ENCODE measurements at regions of chr6 and their contacts with region 1.

Region 1: GRCh38 chr6:13487122-13488014 is at the start of gene GFOD1:
- DNase-seq: peak; percentile 33 to 87 (median 54)
- ATAC-seq: peak; percentile 90
- H3K4me3 ChIP-seq: peak within 1 kb of the TSS; percentile 80
- H3K4me3 Mint-ChIP-seq: peak within 1 kb of the TSS; percentile 78 to 96 (median 92)
- H3K27ac ChIP-seq: peak within 1 kb of the TSS; percentile 23
- H3K27ac Mint-ChIP-seq: peak within 1 kb of the TSS in 7 of 9 donors; percentile 35 to 76 (median 65)
- H3K4me1 ChIP-seq: peaks cover 4 to 9% of the 10 kb centered on the region in 2 donors
- H3K4me1 Mint-ChIP-seq: peaks cover 23 to 40% (median 30%) of the 10 kb centered on the region in 7 donors
- H3K27me3 ChIP-seq: no peaks in the 10 kb centered on the region
- H3K27me3 Mint-ChIP-seq: peaks cover 0 to 14% (median 12%) of the 10 kb centered on the region in 5 donors
- total RNA-seq, gene GFOD1: 0.73 to 10.8 (median 2.0) TPM

Region 2: DNA sequence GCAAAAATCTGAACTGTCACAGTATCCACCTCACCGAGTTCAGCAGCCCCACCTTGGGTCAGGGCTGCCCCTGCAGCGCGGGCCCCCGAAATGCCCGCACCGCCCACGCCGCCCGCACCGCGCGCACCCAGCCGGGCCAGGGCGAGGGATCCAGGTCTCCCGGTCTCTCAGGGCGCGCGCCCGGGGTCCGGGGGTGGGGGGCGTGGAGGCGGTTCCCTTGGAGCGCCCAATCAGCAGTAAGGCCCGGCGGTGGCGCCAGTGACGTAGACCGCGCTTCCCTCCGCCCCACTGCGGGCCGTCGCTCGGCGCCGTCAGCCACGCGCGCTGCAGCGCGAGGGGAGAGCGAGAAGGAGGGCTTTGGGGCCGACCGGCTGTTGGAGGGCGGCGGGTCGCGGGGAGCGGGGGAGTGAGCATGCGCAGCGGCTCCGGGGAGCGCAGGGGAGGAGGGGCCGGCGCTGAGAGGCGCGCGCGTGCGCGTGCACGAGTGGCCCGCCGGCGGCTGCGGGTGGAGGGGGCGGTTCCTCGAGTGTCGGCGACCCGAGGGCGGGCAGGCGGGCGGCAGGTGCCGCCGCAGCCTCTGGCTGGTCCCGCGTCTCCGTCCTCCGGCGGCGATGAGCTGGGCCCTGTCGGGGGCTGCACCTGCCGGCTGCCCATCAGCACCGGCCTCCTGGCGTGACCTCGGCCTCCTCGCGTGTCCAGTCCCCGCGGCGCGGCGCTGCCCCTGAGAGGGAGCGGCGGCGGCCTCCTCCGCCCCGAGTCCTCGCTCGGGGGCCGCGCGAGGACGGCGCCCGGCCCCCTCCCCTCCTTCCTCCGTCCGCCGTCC is 1949.9 kb before region 1 on chr6 and contains the start of gene TMEM170B:
- CTCF ChIA-PET with region 1: no interaction called
- POLR2A ChIA-PET with region 1: no interaction called
- intact Hi-C with region 1: loop called in 1 of 2 experiments (anchors 5 kb)
- DNase-seq: peak; percentile 94 to 99 (median 98)
- ATAC-seq: peak; percentile 95
- H3K4me3 ChIP-seq: peak within 1 kb of the TSS; percentile 62
- H3K4me3 Mint-ChIP-seq: peak within 1 kb of the TSS; percentile 82 to 90 (median 88)
- H3K27ac ChIP-seq: peak within 1 kb of the TSS; percentile 76
- H3K27ac Mint-ChIP-seq: peak within 1 kb of the TSS in 8 of 9 donors; percentile 67 to 93 (median 83)
- H3K4me1 ChIP-seq: peaks cover 4 to 5% of the 10 kb centered on the region in 2 donors
- H3K4me1 Mint-ChIP-seq: peaks cover 6 to 28% (median 19%) of the 10 kb centered on the region in 7 donors
- H3K27me3 ChIP-seq: no peaks in the 10 kb centered on the region
- H3K27me3 Mint-ChIP-seq: peaks cover 0 to 76% (median 7%) of the 10 kb centered on the region in 5 donors
- total RNA-seq, gene TMEM170B: 0.29 to 12.7 (median 3.4) TPM

Region 3: DNA sequence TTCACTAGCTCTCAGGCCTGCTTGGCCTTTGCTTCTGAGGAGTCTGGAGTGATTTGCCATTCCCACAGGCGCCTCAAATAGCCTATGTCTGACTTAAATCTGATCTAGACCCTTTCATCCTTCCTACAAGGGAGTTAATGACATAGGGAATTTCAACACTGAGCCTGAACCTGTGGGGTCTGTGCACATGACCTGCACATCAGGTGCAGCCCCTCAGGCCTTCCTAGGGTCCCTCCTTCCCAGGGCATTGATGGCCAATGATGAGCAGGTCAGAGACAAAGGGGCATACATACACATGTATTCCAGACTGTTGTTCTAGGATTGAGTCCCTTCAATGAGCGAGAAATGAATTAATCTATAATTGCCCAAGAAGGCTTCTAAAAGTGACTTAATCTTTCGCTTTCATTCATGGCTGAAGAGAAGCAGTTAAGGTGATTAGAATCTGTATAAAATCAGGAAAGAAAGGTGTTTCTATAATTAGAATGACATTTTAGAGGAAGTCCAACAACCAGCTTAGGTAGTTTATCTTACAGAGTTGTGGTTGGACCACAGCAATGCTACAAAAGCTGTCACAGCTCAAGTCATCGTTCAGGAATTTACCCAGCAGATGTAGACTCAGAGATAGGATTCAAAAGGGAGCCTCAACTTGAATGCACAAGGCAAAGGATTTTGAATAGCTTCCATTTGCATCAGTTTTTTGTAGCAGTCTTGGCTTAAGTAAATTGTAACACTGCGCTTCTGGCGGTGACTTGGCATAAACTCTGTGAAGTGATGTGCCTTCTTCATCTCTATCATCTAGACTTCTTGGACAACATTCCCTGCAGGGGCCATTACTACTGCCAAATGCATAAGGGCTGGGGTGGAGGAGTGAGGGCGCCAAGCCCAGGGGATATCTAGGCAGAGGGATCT is 132.1 kb before region 1 on chr6:
- CTCF ChIA-PET with region 1: no interaction called
- POLR2A ChIA-PET with region 1: no interaction called
- intact Hi-C with region 1: loop called (anchors 1 to 5 kb)
- DNase-seq: peak in 8 of 9 donors; percentile 10 to 42 (median 30)
- ATAC-seq: peak; percentile 75
- H3K4me3 ChIP-seq: peak overlapping the region; percentile 22
- H3K4me3 Mint-ChIP-seq: peak overlapping the region; percentile 78 to 91 (median 80)
- H3K27ac ChIP-seq: peak overlapping the region; percentile 46
- H3K27ac Mint-ChIP-seq: peak overlapping the region; percentile 71 to 98 (median 85)
- H3K4me1 ChIP-seq: peaks cover 27 to 32% of the 10 kb centered on the region in 2 donors
- H3K4me1 Mint-ChIP-seq: peaks cover 33 to 56% (median 46%) of the 10 kb centered on the region in 7 donors
- H3K27me3 ChIP-seq: no peaks in the 10 kb centered on the region
- H3K27me3 Mint-ChIP-seq: no peaks in the 10 kb centered on the region

Region 4: DNA sequence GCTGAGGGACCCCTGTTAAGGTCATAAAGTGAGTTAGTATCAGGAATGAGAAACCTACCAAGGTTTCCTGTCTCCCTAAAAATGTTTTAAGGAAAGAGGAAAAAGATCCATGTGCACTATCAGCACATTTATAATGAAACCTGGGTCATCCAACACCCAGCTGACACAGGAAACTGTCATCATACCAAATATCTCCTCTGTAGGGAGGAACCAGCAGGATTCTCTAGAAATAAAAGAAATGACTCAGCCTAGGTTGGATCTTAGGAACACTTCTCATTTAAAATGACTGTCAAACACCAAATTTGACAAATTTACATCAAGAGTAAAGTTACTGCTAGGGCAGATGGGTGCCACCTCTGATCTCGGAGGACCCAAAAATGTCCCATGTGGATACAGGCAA is 21.6 kb before region 1 on chr6:
- CTCF ChIA-PET with region 1: no interaction called
- POLR2A ChIA-PET with region 1: no interaction called
- intact Hi-C with region 1: loop called in 1 of 2 experiments (anchors 2 kb)
- DNase-seq: no peak
- ATAC-seq: no peak
- H3K4me3 ChIP-seq: no peak overlapping the region
- H3K4me3 Mint-ChIP-seq: no peak overlapping the region
- H3K27ac ChIP-seq: no peak overlapping the region
- H3K27ac Mint-ChIP-seq: peak overlapping the region in 2 of 9 donors; percentile 16 to 72
- H3K4me1 ChIP-seq: peaks cover 0 to 16% of the 10 kb centered on the region in 2 donors
- H3K4me1 Mint-ChIP-seq: peaks cover 16 to 50% (median 37%) of the 10 kb centered on the region in 7 donors
- H3K27me3 ChIP-seq: no peaks in the 10 kb centered on the region
- H3K27me3 Mint-ChIP-seq: no peaks in the 10 kb centered on the region

Region 5: DNA sequence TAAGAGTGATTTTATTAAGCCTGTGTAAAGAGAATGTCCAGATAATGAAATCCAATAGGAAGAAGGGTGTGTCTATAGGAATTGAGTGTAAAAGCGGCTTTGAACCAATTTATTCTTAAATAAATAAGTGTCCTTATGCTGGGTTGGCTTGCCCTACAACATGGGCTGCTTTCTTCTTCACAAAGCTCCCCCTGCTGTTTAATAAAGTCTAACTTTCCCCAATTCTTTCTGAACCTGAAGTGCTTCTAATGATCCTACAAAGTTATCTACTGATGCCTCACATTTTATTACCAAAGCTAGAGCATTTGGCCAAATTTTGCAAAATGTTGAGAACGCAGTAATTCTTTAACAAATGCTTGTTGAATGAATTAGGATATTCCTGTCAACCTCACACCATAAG is 50.7 kb after region 1 on chr6:
- CTCF ChIA-PET with region 1: no interaction called
- POLR2A ChIA-PET with region 1: interaction called, 3 read pairs
- intact Hi-C with region 1: loop called in 1 of 2 experiments (anchors 1 kb)
- DNase-seq: peak in 5 of 9 donors; percentile 18 to 38 (median 25)
- ATAC-seq: no peak
- H3K4me3 ChIP-seq: no peak overlapping the region
- H3K4me3 Mint-ChIP-seq: no peak overlapping the region
- H3K27ac ChIP-seq: no peak overlapping the region
- H3K27ac Mint-ChIP-seq: no peak overlapping the region
- H3K4me1 ChIP-seq: no peaks in the 10 kb centered on the region
- H3K4me1 Mint-ChIP-seq: peaks cover 0 to 3% (median 0%) of the 10 kb centered on the region in 7 donors
- H3K27me3 ChIP-seq: no peaks in the 10 kb centered on the region
- H3K27me3 Mint-ChIP-seq: no peaks in the 10 kb centered on the region

Region 6: GRCh38 chr6:13778028-13778427 is 290.7 kb after region 1 on chr6:
- CTCF ChIA-PET with region 1: no interaction called
- POLR2A ChIA-PET with region 1: no interaction called
- intact Hi-C with region 1: no loop called
- DNase-seq: no peak
- ATAC-seq: no peak
- H3K4me3 ChIP-seq: no peak overlapping the region
- H3K4me3 Mint-ChIP-seq: no peak overlapping the region
- H3K27ac ChIP-seq: no peak overlapping the region
- H3K27ac Mint-ChIP-seq: no peak overlapping the region
- H3K4me1 ChIP-seq: no peaks in the 10 kb centered on the region
- H3K4me1 Mint-ChIP-seq: no peaks in the 10 kb centered on the region
- H3K27me3 ChIP-seq: no peaks in the 10 kb centered on the region
- H3K27me3 Mint-ChIP-seq: no peaks in the 10 kb centered on the region

Region 7: DNA sequence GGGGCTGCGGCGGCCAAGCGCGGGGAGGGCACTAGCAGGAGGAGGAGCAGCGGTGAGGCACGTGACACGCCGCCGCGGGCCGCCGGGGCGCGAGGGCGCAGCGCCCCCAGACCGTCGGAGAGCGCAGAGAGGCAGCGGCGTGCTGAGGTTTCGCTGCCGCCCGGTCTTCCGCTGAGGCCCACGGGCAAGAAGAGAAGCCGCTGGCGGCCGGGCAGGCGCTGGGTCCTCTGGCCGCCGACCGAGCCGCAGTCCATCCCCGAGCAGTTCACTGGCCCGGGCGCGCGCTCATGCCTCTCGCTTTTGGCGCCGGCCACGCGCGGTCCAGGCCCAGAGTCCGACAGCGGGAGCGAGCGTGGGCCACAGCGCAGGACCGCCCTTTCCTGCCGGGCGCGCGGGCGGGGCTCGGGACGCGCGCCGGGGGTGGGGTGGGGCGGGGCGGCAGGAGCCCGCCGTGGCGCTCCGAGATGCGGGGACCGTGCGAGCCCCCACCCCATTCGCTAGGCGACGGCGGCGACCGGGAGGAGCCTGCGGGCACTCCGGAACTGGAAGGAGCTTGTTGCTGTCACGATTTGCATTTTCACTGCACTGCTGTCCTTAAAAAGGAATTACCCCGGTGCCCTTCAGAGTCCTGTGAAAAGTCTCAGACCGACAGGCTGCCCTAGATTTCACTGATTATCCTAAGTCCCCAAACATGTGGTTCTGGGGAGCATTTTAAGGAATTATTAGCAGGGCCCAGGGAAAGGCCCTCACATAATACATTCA is 327.0 kb after region 1 on chr6 and contains the start of gene MCUR1:
- CTCF ChIA-PET with region 1: no interaction called
- POLR2A ChIA-PET with region 1: no interaction called
- intact Hi-C with region 1: loop called (anchors 2 to 5 kb)
- DNase-seq: peak; percentile 69 to 87 (median 76)
- ATAC-seq: peak; percentile 91
- H3K4me3 ChIP-seq: peak within 1 kb of the TSS; percentile 71
- H3K4me3 Mint-ChIP-seq: peak within 1 kb of the TSS; percentile 87 to 92 (median 90)
- H3K27ac ChIP-seq: peak within 1 kb of the TSS; percentile 82
- H3K27ac Mint-ChIP-seq: peak within 1 kb of the TSS; percentile 60 to 93 (median 85)
- H3K4me1 ChIP-seq: peaks cover 0 to 13% of the 10 kb centered on the region in 2 donors
- H3K4me1 Mint-ChIP-seq: peaks cover 17 to 40% (median 38%) of the 10 kb centered on the region in 7 donors
- H3K27me3 ChIP-seq: no peaks in the 10 kb centered on the region
- H3K27me3 Mint-ChIP-seq: peaks cover 0 to 25% (median 0%) of the 10 kb centered on the region in 5 donors
- total RNA-seq, gene MCUR1: 5.7 to 20.6 (median 10.0) TPM